ENCODE measurements at regions of chr1 and their contacts with region 1.

Region 1: GRCh38 chr1:68120136-68120791 is 69.8 kb upstream of the DIRAS3 start:
- DNase-seq: peak; percentile 85
- H3K4me3 ChIP-seq: no peak overlapping the region
- H3K27ac ChIP-seq: no peak overlapping the region
- H3K4me1 ChIP-seq: peaks cover 5% of the 10 kb centered on the region
- H3K27me3 ChIP-seq: no peaks in the 10 kb centered on the region
- CTCF ChIP-seq: peak; percentile 59 to 71
- POLR2A ChIP-seq: peak; percentile 26

Region 2: GRCh38 chr1:68016381-68016780 is 103.9 kb before region 1 on chr1:
- CTCF ChIA-PET with region 1: no interaction called
- POLR2A ChIA-PET with region 1: no interaction called
- dilution Hi-C with region 1: no loop called
- intact Hi-C with region 1: no loop called
- DNase-seq: no peak
- H3K4me3 ChIP-seq: no peak overlapping the region
- H3K27ac ChIP-seq: no peak overlapping the region
- H3K4me1 ChIP-seq: no peaks in the 10 kb centered on the region
- H3K27me3 ChIP-seq: no peaks in the 10 kb centered on the region
- CTCF ChIP-seq: no peak
- POLR2A ChIP-seq: no peak

Region 3: DNA sequence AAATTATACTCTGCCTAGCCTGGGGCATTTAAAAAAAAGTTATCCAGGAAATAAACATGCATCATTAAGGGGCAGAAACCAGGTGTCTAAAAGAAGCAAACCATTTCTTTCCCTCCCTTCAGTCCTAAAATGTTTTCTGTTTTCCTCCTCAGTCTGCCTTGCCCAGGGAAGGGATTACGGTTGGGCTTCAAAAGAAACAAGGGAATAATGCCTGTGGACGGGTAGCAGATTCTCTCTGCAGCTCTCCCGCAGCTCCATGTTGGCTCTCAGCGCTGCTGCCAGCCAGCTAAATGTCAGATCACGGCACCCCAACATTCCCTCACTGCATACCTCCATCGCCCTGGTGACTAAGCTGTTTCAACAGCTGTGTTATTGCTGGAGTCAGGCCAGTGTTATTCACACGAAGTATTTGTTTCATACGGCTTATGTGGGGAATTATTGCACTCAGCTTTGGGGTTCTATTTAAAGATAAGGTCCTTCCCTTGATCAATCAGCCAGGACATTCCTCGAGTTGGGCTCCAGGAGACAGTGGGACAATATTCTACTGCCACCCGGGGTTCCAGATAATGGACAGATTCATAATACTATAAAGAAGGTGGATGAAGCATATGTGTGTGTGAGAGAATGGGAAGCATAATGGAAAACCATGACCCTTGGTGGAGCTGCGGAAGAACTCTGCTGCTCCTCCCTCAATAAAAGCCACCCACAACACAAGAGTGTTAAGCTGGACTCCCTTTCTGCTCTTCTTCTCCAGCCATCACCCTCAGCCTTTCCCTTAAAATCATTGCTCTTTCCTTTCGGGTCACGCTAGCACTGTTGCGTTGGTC is 53.9 kb after region 1 on chr1:
- CTCF ChIA-PET with region 1: interaction called, 40 read pairs
- POLR2A ChIA-PET with region 1: no interaction called
- dilution Hi-C with region 1: no loop called
- intact Hi-C with region 1: no loop called
- DNase-seq: peak; percentile 98
- H3K4me3 ChIP-seq: peak overlapping the region in 1 of 3 experiments; percentile 41
- H3K27ac ChIP-seq: peak overlapping the region; percentile 93
- H3K4me1 ChIP-seq: peaks cover 66% of the 10 kb centered on the region
- H3K27me3 ChIP-seq: no peaks in the 10 kb centered on the region
- CTCF ChIP-seq: no peak
- POLR2A ChIP-seq: peak; percentile 60

Region 4: GRCh38 chr1:68293609-68294366 is 173.5 kb after region 1 on chr1:
- CTCF ChIA-PET with region 1: interaction called, 10 read pairs
- POLR2A ChIA-PET with region 1: no interaction called
- dilution Hi-C with region 1: no loop called
- intact Hi-C with region 1: no loop called
- DNase-seq: peak; percentile 41
- H3K4me3 ChIP-seq: no peak overlapping the region
- H3K27ac ChIP-seq: no peak overlapping the region
- H3K4me1 ChIP-seq: peaks cover 7% of the 10 kb centered on the region
- H3K27me3 ChIP-seq: no peaks in the 10 kb centered on the region
- CTCF ChIP-seq: no peak
- POLR2A ChIP-seq: no peak

Region 5: GRCh38 chr1:68331117-68331865 is 211.0 kb after region 1 on chr1:
- CTCF ChIA-PET with region 1: interaction called, 34 read pairs
- POLR2A ChIA-PET with region 1: no interaction called
- dilution Hi-C with region 1: loop called (anchors 25 kb)
- intact Hi-C with region 1: no loop called
- DNase-seq: peak; percentile 87
- H3K4me3 ChIP-seq: no peak overlapping the region
- H3K27ac ChIP-seq: peak overlapping the region; percentile 30
- H3K4me1 ChIP-seq: peaks cover 29% of the 10 kb centered on the region
- H3K27me3 ChIP-seq: no peaks in the 10 kb centered on the region
- CTCF ChIP-seq: no peak
- POLR2A ChIP-seq: peak; percentile 26

Region 6: GRCh38 chr1:68352202-68352601 is 231.9 kb after region 1 on chr1:
- CTCF ChIA-PET with region 1: interaction called, 312 read pairs
- POLR2A ChIA-PET with region 1: no interaction called
- dilution Hi-C with region 1: loop called (anchors 25 kb)
- intact Hi-C with region 1: no loop called
- DNase-seq: no peak
- H3K4me3 ChIP-seq: no peak overlapping the region
- H3K27ac ChIP-seq: no peak overlapping the region
- H3K4me1 ChIP-seq: no peaks in the 10 kb centered on the region
- H3K27me3 ChIP-seq: no peaks in the 10 kb centered on the region
- CTCF ChIP-seq: no peak
- POLR2A ChIP-seq: no peak

Region 7: DNA sequence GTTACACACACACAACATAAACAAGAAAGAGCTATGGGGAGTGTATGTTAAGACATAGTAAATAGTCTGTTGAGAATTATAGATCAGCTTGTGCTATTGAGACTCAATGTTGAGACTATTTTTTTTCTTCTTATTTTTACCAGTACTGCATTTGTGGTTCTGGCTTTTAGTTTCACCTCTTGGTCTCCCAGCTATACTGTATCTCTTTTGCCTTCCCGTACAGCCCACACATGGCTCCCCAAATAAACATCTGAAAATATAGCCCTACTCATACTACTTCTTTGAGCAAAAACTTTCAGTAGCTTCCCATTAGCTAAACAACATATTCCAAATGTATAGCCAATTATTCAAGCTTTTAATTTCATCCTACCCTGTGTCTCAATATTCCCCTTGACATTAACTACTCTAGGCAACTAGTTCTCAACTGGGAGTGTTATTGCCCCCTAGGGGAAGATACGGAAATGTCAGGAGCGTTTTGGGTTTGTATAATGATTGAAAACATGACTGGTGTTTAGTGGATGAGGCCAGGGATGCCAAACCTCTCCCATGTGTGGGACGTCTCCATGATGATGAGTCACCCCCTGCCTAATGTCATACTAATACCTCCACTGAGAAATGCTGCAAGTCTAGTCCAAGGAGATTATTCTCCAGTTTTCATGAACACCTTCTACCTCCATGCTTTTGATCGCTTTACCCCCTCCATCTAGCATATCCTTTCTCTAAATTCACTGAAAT is 322.7 kb after region 1 on chr1:
- CTCF ChIA-PET with region 1: interaction called, 128 read pairs
- POLR2A ChIA-PET with region 1: no interaction called
- dilution Hi-C with region 1: no loop called
- intact Hi-C with region 1: loop called (anchors 1 kb)
- DNase-seq: peak; percentile 53
- H3K4me3 ChIP-seq: no peak overlapping the region
- H3K27ac ChIP-seq: no peak overlapping the region
- H3K4me1 ChIP-seq: no peaks in the 10 kb centered on the region
- H3K27me3 ChIP-seq: peaks cover 4 to 14% of the 10 kb centered on the region in 2 experiments
- CTCF ChIP-seq: peak; percentile 55 to 68
- POLR2A ChIP-seq: no peak

Measured in endothelial cell of umbilical vein (primary cell).